A549 (cell line): ENCODE measurements at regions of chr6 and their contacts with region 1.

Region 1: DNA sequence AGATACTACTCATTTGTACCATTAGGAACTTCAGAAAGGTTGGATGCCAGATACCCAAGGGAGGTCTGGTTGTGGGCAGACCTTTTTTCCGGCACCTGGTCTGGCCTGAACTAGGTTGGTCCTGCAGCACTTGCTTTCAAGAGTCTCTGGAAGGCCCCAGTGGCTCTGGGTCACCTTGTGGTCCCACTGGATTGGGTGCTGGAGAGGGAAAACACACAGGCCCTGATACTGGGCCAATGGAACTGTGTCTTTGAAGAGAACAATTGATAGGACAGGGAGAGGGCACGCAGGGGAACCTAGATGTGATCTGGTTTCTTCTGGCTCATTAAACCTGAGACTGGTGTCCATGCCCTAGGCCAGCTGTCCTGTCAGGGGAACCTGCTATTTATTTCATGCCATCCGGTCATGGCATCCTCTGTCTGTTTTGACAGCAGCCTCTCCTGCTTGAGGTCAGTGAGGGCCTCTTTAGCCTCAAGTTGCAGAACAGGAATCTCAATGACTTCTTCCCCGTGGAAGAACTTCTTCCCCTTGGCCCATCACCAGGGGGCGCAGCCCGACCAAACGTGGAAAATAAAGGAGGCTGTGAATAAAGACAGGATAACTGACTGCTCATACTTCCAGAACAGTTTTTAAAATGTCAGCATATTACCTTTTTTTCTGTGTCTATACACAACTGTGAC is 25.0 kb downstream of the TAF8 start:
- DNase-seq: peak; percentile 62 to 74
- ATAC-seq: peak; percentile 84 to 88
- H3K4me3 ChIP-seq: no peak overlapping the region
- H3K27ac ChIP-seq: no peak overlapping the region
- H3K4me1 ChIP-seq: no peaks in the 10 kb centered on the region
- CTCF ChIP-seq: peak; percentile 86
- EP300 ChIP-seq: no peak
- POLR2A ChIP-seq: no peak
- RAD21 ChIP-seq: peak; percentile 89 to 93

Region 2: DNA sequence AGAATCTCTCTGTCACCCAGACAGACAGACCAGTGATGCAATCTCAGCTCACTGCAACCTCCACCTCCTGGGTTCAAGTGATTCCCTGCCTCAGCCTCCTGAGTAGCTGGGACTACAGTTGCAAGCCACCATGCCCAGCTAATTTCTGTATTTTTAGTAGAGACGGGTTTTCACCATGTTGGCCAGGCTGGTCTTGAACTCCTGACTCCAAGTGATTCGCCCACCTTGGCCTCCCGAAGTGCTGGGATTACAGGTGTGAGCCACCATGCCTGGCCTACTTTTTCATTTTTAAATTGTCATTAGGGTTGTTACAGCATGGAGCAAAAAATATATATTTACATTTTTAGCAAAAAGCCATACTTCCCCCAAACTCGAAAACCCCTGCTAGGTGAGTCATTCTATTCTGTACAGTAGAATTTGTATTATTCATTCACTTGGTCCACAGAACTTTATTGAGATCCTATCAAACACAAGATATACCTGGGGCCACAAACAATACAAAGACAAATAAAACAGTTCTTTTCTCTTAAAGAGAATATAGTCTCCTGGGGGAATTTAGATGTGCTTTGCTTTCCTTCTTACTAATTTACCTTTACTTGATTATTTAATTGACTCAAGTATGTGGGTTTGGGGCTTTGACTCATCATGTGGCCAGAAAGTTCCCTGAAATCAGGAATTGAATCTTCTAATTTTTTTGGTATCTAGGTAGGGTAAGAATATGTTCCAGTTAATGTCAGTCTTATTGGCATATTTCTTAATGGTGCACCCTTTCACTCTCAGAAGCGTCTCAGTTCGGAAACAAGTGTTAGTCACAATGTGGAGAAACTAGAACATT is 117.1 kb before region 1 on chr6:
- CTCF ChIA-PET with region 1: no interaction called
- POLR2A ChIA-PET with region 1: no interaction called
- DNase-seq: no peak
- ATAC-seq: no peak
- H3K4me3 ChIP-seq: no peak overlapping the region
- H3K27ac ChIP-seq: peak overlapping the region in 1 of 2 experiments; percentile 95; a peak in 4 of 6 replicates
- H3K4me1 ChIP-seq: peaks cover 45% of the 10 kb centered on the region
- CTCF ChIP-seq: no peak
- EP300 ChIP-seq: no peak
- POLR2A ChIP-seq: no peak
- RAD21 ChIP-seq: no peak

Region 3: DNA sequence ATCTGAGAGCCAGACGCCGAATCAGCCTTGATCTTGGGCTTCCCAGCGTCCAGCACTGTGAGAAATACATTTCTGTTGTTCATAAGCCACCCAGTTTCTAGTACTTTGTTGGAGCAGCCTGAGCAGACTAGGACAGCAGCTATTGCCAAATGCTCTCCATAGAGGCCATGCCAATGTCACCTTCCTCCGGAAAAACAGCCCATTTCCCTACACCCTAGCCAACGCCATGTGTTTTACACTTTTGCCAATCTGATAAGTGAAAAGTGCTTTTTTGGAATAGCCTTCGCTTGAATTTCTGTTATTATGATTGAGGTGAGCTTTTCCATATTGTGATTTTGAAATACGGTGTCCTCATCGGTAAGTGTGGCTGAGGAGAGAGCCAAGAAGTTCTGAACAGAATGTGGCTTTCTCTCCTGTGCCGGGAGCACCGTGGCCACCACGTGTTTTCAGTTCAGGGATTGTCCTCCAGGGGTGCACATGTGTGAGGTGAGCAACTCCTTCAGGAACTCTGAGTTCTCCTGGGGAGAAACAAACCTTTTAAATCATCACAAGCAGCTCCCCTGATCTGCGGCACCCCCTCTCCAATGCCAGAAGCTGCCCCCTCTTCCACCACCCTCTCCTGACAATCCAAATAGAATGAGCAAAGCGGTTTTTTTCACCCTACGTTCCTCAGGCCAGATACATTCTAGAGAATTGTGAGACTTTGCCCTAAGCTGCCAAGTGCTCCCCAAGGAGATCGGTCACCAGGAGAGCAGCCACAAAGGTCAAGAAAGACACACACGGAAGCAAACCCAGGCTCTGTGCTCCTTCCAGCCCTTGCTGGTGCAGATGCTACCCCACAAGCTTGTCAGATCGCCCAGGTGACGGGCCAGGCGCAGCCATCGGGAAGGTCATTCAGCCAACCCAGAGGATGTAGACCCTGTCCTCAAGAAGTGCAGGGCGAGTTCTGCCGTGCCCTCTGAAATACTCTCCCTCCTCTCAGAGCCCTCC is 11.0 kb after region 1 on chr6:
- CTCF ChIA-PET with region 1: interaction called, 22 read pairs
- POLR2A ChIA-PET with region 1: no interaction called
- DNase-seq: peak; percentile 25 to 41
- ATAC-seq: peak; percentile 57 to 59; a peak in 3 of 6 replicates
- H3K4me3 ChIP-seq: no peak overlapping the region
- H3K27ac ChIP-seq: peak overlapping the region in 1 of 2 experiments; percentile 32; a peak in 1 of 6 replicates
- H3K4me1 ChIP-seq: peaks cover 16% of the 10 kb centered on the region
- CTCF ChIP-seq: no peak
- EP300 ChIP-seq: no peak
- POLR2A ChIP-seq: no peak
- RAD21 ChIP-seq: no peak

Region 4: DNA sequence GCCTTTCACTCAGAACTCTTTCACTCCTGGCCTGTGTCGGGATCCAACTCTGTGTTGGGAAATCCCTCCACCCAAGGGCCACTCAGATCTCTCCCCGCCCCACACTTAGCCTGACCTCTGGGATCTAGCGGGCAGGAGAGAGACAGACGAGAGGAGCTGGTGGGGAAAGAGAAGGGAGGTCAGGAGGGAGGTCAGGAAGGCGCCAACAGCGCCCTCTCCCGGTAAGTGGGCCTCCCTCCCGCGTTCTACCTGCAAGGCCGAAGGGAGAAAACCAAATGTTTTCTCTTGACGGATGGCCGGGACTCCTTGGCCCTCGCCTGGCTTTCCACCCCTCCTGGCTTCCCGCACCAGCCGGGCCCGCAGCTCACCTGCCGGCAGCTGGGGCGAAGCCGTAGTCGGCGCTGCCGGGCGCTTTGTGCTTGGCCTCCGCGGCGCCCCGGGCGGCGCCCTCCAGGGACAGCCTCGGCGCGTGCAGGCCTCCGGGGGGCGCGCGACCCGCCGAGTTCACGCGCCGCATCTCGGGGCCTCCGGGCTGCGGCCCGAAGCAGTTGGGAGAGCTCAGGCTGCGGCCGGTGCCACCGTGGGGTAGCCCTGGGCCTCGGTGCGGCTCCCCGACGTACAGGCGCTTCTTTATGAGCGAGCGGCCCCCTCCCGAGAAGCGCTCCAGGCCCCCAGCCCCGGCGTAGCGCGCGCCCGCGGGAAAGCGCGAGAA is 29.0 kb after region 1 on chr6:
- CTCF ChIA-PET with region 1: no interaction called
- POLR2A ChIA-PET with region 1: no interaction called
- DNase-seq: peak in 1 of 2 experiments; percentile 30
- ATAC-seq: peak in 1 of 2 experiments; percentile 21; a peak in 1 of 6 replicates
- H3K4me3 ChIP-seq: no peak overlapping the region
- H3K27ac ChIP-seq: no peak overlapping the region
- H3K4me1 ChIP-seq: peaks cover 24% of the 10 kb centered on the region
- CTCF ChIP-seq: no peak
- EP300 ChIP-seq: no peak
- POLR2A ChIP-seq: no peak
- RAD21 ChIP-seq: no peak

Region 5: GRCh38 chr6:42166444-42167141 is 91.3 kb after region 1 on chr6:
- CTCF ChIA-PET with region 1: interaction called, 172 read pairs
- POLR2A ChIA-PET with region 1: no interaction called
- DNase-seq: peak; percentile 72 to 81
- ATAC-seq: peak; percentile 92 to 93
- H3K4me3 ChIP-seq: no peak overlapping the region
- H3K27ac ChIP-seq: peak overlapping the region; percentile 70 to 86; a peak in 5 of 6 replicates
- H3K4me1 ChIP-seq: peaks cover 5% of the 10 kb centered on the region; the same call in 2 of the 3 replicates
- CTCF ChIP-seq: peak; percentile 85
- EP300 ChIP-seq: no peak
- POLR2A ChIP-seq: no peak
- RAD21 ChIP-seq: peak; percentile 90 to 91